WTC11 (cell line): ENCODE measurements at regions of chr1 and their contacts with region 1.

Region 1: GRCh38 chr1:29793101-29793546 is 556.8 kb downstream of the PTPRU start:
- DNase-seq: peak; percentile 96
- ATAC-seq: peak; percentile 91
- H3K4me3 Mint-ChIP-seq: no peak overlapping the region
- H3K27ac Mint-ChIP-seq: no peak overlapping the region; the same call in 1 of the 2 replicates
- H3K4me1 Mint-ChIP-seq: peaks cover 4% of the 10 kb centered on the region; the same call in 1 of the 2 replicates
- H3K27me3 Mint-ChIP-seq: no peaks in the 10 kb centered on the region; the same call in 1 of the 2 replicates
- CTCF ChIP-seq: peak; percentile 63

Region 2: GRCh38 chr1:29698033-29698432 is 95.1 kb before region 1 on chr1:
- CTCF ChIA-PET with region 1: interaction called, 10 read pairs
- POLR2A ChIA-PET with region 1: no interaction called
- DNase-seq: peak; percentile 70
- ATAC-seq: peak; percentile 93
- H3K4me3 Mint-ChIP-seq: no peak overlapping the region
- H3K27ac Mint-ChIP-seq: no peak overlapping the region; the same call in 1 of the 2 replicates
- H3K4me1 Mint-ChIP-seq: peaks cover 7% of the 10 kb centered on the region
- H3K27me3 Mint-ChIP-seq: no peaks in the 10 kb centered on the region
- CTCF ChIP-seq: peak; percentile 52; the same call in 1 of the 2 replicates

Region 3: GRCh38 chr1:29805141-29805625 is 12.1 kb after region 1 on chr1:
- CTCF ChIA-PET with region 1: interaction called, 20 read pairs
- POLR2A ChIA-PET with region 1: no interaction called
- DNase-seq: no peak
- ATAC-seq: peak; percentile 34; the same call in 1 of the 2 replicates
- H3K4me3 Mint-ChIP-seq: no peak overlapping the region
- H3K27ac Mint-ChIP-seq: no peak overlapping the region
- H3K4me1 Mint-ChIP-seq: peaks cover 3% of the 10 kb centered on the region; the same call in 1 of the 2 replicates
- H3K27me3 Mint-ChIP-seq: no peaks in the 10 kb centered on the region
- CTCF ChIP-seq: no peak

Region 4: DNA sequence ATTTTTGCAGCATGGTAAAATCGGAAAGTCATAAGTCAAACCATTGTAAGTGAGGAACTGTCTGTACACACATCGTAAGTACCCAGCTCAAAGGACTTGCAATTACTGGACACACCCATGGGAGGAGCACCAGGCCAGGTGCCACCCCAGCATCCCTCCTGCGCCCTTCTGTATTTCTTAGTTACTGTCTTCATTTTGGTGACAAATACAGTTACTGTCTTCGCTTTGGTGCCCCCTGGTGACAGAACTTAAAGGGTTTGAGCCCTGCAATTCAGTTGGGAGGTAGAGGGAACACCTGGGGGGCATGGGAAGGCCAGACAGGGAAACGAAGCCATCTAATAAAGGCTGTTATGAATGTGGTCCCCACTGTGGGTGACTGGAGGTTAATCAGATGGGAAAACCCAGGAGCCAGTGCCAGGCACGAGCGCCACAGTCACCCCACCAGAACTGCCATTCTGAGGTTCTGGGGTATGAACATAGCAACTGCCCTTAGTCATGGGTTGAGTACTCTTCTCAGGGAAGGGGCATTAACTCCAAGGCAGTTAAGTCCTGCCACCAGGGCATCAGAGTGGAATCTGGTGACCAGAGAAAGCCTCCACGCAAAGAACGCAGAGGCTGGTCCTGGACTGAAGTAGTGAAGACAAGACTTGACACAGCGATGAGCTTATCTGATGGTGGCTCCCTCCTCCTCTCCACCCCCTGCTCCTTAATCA is 56.1 kb after region 1 on chr1:
- CTCF ChIA-PET with region 1: interaction called, 37 read pairs
- POLR2A ChIA-PET with region 1: no interaction called
- DNase-seq: peak; percentile 76
- ATAC-seq: peak; percentile 92
- H3K4me3 Mint-ChIP-seq: no peak overlapping the region
- H3K27ac Mint-ChIP-seq: no peak overlapping the region
- H3K4me1 Mint-ChIP-seq: no peaks in the 10 kb centered on the region
- H3K27me3 Mint-ChIP-seq: no peaks in the 10 kb centered on the region
- CTCF ChIP-seq: peak; percentile 45; the same call in 1 of the 2 replicates

Region 5: DNA sequence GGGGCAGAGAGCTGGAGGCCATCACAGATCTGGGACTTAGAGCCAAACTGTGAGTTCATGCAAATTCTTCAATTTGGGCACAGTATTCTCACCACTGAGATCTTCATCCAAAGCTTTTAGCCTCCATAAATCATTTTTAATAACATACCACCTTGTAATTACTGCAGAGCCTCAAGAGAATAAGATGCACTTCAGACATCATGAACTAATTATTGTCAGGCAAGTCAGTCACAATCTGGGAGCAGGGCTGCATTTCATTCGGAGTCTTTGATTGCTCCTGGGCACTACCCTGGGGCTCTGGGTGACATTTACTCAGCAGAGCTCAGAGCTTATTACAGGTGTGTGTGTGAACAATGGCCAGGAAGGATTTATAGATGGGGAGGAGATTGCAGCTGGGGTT is 66.9 kb after region 1 on chr1:
- CTCF ChIA-PET with region 1: no interaction called
- POLR2A ChIA-PET with region 1: no interaction called
- DNase-seq: no peak
- ATAC-seq: no peak
- H3K4me3 Mint-ChIP-seq: no peak overlapping the region
- H3K27ac Mint-ChIP-seq: no peak overlapping the region
- H3K4me1 Mint-ChIP-seq: peaks cover 2% of the 10 kb centered on the region
- H3K27me3 Mint-ChIP-seq: no peaks in the 10 kb centered on the region
- CTCF ChIP-seq: no peak

Region 6: GRCh38 chr1:30085811-30086770 is 293.0 kb after region 1 on chr1:
- CTCF ChIA-PET with region 1: interaction called, 25 read pairs
- POLR2A ChIA-PET with region 1: no interaction called
- DNase-seq: peak; percentile 94
- ATAC-seq: peak; percentile 74
- H3K4me3 Mint-ChIP-seq: peak overlapping the region; percentile 61
- H3K27ac Mint-ChIP-seq: no peak overlapping the region
- H3K4me1 Mint-ChIP-seq: peaks cover 15% of the 10 kb centered on the region
- H3K27me3 Mint-ChIP-seq: peaks cover 3% of the 10 kb centered on the region
- CTCF ChIP-seq: peak; percentile 80

Region 7: DNA sequence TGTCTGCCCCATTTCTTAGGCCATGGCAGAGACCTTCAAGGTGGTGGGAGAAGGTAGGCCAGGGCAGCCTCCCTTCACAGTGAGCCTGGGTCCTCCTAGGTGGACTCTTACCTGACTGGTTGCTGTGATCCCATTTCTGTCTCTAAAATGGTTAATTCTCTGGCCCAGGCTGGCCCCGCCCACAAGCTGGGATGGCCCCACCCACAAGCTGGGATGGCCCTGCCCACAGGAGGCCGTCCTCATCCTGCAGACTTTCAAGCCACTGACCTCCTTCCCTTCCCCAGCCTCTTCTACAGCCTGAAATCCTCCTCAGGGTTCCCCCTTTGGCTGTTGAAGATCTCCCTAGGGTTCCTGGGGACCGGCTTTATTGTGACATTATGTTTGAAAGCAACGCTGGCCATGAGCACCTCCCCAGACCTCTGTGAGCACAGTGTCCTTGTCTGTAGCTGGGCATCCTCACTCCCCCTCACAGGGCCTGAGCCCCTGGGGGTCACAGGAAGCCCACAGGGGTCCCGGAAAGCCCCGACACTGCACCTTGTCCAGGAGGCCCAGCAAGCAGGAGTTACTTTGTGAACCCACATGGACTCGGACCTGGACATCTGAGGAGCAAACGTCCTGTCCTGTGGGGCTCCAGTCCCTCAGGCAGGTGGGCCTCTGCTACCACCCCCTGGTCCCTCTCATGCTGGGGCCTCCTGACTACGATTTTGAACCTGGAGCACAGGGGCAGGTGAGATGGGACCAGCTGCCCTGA is 308.5 kb after region 1 on chr1:
- CTCF ChIA-PET with region 1: interaction called, 10 read pairs
- POLR2A ChIA-PET with region 1: no interaction called
- DNase-seq: peak; percentile 66
- ATAC-seq: peak; percentile 63
- H3K4me3 Mint-ChIP-seq: no peak overlapping the region
- H3K27ac Mint-ChIP-seq: no peak overlapping the region
- H3K4me1 Mint-ChIP-seq: peaks cover 7% of the 10 kb centered on the region
- H3K27me3 Mint-ChIP-seq: no peaks in the 10 kb centered on the region; the same call in 1 of the 2 replicates
- CTCF ChIP-seq: no peak

Region 8: GRCh38 chr1:30111431-30111830 is 318.3 kb after region 1 on chr1:
- CTCF ChIA-PET with region 1: interaction called, 24 read pairs
- POLR2A ChIA-PET with region 1: no interaction called
- DNase-seq: peak; percentile 76
- ATAC-seq: peak; percentile 97
- H3K4me3 Mint-ChIP-seq: no peak overlapping the region
- H3K27ac Mint-ChIP-seq: no peak overlapping the region; the same call in 1 of the 2 replicates
- H3K4me1 Mint-ChIP-seq: 0 out of 2 replicates have a peak, but pooled peaks cover 3% of the 10 kb centered on the region
- H3K27me3 Mint-ChIP-seq: no peaks in the 10 kb centered on the region
- CTCF ChIP-seq: peak; percentile 32; the same call in 1 of the 2 replicates